ENCODE measurements at regions of chr20 and their contacts with region 1.

Region 1: DNA sequence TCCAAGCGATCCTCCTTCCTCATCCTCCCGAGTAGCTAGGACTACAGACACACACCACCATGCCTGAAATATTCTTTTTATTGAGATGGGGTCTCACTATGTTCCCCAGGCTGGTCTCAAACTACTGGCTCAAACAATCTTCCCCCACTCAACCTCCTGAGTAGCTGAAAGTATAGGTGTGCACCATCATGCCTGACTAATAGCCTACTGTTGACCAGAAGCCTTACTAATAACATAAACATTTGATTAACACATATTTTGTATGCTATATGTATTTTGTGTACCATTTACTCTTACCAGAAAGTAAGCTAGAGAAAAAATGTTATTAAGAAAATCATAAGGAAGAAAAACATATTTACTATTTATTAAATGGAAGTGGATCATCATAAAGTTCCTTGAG is 11.9 kb upstream of the WFDC10A start:
- DNase-seq: no peak
- ATAC-seq: no peak
- H3K4me3 ChIP-seq: no peak overlapping the region
- H3K4me3 Mint-ChIP-seq: no peak overlapping the region
- H3K27ac ChIP-seq: no peak overlapping the region
- H3K27ac Mint-ChIP-seq: no peak overlapping the region
- H3K4me1 ChIP-seq: no peaks in the 10 kb centered on the region
- H3K4me1 Mint-ChIP-seq: no peaks in the 10 kb centered on the region
- H3K27me3 ChIP-seq: peaks cover 0 to 7% of the 10 kb centered on the region in 2 experiments
- H3K27me3 Mint-ChIP-seq: no peaks in the 10 kb centered on the region
- CTCF ChIP-seq: no peak

Region 2: GRCh38 chr20:45636513-45636912 is 18.9 kb after region 1 on chr20:
- CTCF ChIA-PET with region 1: no interaction called
- POLR2A ChIA-PET with region 1: no interaction called
- intact Hi-C with region 1: loop called in 1 of 2 experiments (anchors 2 kb)
- DNase-seq: no peak
- ATAC-seq: no peak
- H3K4me3 ChIP-seq: no peak overlapping the region
- H3K4me3 Mint-ChIP-seq: no peak overlapping the region
- H3K27ac ChIP-seq: no peak overlapping the region
- H3K27ac Mint-ChIP-seq: no peak overlapping the region
- H3K4me1 ChIP-seq: no peaks in the 10 kb centered on the region
- H3K4me1 Mint-ChIP-seq: no peaks in the 10 kb centered on the region
- H3K27me3 ChIP-seq: peaks cover 0 to 2% of the 10 kb centered on the region in 2 experiments
- H3K27me3 Mint-ChIP-seq: peaks cover 31% of the 10 kb centered on the region
- CTCF ChIP-seq: no peak

Measured in CD4-positive, alpha-beta T cell (primary cell).